CD4-positive, alpha-beta T cell (primary cell): ENCODE measurements at regions of chr16 and their contacts with region 1.

Region 1: GRCh38 chr16:2720719-2721633 is 952 bp upstream of the PRSS27 start:
- DNase-seq: peak; percentile 70 to 94 (median 82)
- ATAC-seq: peak; percentile 87
- H3K4me3 ChIP-seq: peak overlapping the region; percentile 55
- H3K4me3 Mint-ChIP-seq: peak overlapping the region; percentile 81
- H3K27ac ChIP-seq: peak overlapping the region in 1 of 2 donors; percentile 35
- H3K27ac Mint-ChIP-seq: peak overlapping the region; percentile 30
- H3K4me1 ChIP-seq: peaks cover 14% of the 10 kb centered on the region
- H3K4me1 Mint-ChIP-seq: no peaks in the 10 kb centered on the region
- H3K27me3 ChIP-seq: peaks cover 0 to 2% of the 10 kb centered on the region in 2 experiments
- H3K27me3 Mint-ChIP-seq: peaks cover 10% of the 10 kb centered on the region
- CTCF ChIP-seq: peak; percentile 59

Region 2: DNA sequence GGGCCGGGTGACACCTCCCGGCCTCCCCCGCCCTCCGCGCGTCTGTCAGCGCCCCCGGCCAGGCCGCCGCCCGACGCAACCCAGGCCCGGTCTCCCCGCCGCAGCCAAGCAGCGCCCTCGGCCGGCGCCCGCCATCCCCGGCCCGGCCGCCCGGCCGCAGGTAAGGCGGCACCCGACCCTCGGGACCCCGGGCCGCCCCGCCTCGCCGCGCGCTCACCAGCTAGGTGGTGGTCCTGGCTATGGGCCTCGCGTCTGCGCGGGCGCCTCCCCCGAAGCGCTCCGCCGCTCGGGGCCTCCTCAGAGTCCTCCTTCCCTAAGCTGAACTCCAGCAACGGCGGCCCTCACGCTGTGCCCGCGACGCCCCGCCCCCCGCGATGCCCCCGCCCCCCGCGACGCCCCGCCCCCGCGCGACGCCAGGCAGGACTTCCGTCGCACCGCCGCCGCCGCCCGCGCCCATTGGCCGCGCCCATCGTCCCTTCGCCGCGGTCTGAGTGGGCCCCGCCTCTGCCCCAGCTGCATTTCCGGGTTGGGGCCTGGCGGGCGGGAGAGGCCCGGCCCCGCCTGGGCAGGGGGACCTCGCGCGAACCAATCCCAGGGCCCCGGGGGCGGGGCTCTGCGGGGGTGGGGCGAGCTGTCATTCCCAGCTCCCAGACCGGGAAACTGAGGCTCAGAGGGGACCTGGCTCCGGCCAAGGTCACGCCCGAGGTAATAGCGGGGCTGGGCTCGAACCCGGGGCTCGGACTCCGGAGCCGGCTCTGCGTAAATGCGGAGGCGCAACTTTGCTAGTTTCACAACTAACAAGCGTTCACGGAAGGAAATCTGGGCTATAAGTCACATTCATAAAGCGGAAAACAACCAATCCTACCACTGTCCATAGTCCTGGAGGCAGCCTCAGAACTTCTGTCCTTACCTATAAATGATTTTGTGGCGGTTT is 47.6 kb before region 1 on chr16:
- CTCF ChIA-PET with region 1: no interaction called
- POLR2A ChIA-PET with region 1: no interaction called
- intact Hi-C with region 1: loop called in 1 of 2 experiments (anchors 2 kb)
- DNase-seq: peak; percentile 87 to 98 (median 94)
- ATAC-seq: peak; percentile 94
- H3K4me3 ChIP-seq: peak overlapping the region; percentile 86
- H3K4me3 Mint-ChIP-seq: peak overlapping the region; percentile 86
- H3K27ac ChIP-seq: peak overlapping the region; percentile 57 to 66
- H3K27ac Mint-ChIP-seq: peak overlapping the region; percentile 91
- H3K4me1 ChIP-seq: peaks cover 39% of the 10 kb centered on the region
- H3K4me1 Mint-ChIP-seq: peaks cover 27% of the 10 kb centered on the region
- H3K27me3 ChIP-seq: no peaks in the 10 kb centered on the region
- H3K27me3 Mint-ChIP-seq: no peaks in the 10 kb centered on the region
- CTCF ChIP-seq: no peak

Region 3: DNA sequence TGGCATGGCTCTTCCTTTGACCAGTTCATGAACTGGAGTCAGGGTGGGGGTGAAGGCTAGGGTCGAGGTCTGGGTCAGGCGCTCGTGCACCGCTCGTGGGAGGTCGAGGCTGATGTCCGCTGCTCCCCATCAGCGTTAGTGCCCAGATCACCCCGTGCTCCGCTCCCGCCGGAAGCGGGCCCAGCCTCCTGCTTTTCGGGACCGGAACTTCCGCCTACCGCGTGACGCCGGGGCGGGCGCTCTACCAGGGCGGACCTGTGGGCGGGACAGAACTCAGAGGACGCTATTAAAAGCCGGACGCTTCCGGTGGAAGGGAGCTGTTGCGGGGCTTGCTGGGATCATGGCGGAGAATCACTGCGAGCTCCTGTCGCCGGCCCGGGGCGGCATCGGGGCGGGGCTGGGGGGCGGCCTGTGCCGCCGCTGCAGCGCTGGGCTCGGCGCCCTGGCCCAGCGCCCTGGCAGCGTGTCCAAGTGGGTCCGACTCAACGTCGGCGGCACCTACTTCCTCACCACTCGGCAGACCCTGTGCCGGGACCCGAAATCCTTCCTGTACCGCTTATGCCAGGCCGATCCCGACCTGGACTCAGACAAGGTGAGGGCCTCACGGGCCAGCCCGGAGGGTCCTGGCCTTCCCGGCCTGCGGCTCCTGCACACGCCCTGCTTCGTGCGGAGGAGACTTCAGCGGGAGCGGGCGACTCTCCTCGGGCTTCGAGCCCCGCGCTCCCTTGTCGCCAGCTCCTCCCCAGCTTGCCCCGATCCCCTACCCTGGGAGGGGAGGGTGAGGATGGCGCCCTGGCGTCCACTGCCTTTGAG is 38.6 kb before region 1 on chr16 and contains the start of gene KCTD5:
- CTCF ChIA-PET with region 1: no interaction called
- POLR2A ChIA-PET with region 1: interaction called, 3 read pairs
- intact Hi-C with region 1: loop called in 1 of 2 experiments (anchors 1 kb)
- DNase-seq: peak; percentile 93 to 97 (median 94)
- ATAC-seq: peak; percentile 96
- H3K4me3 ChIP-seq: peak within 1 kb of the TSS; percentile 100
- H3K4me3 Mint-ChIP-seq: peak within 1 kb of the TSS; percentile 96
- H3K27ac ChIP-seq: peak within 1 kb of the TSS; percentile 73 to 77
- H3K27ac Mint-ChIP-seq: peak within 1 kb of the TSS; percentile 91
- H3K4me1 ChIP-seq: peaks cover 32% of the 10 kb centered on the region
- H3K4me1 Mint-ChIP-seq: peaks cover 20% of the 10 kb centered on the region
- H3K27me3 ChIP-seq: no peaks in the 10 kb centered on the region
- H3K27me3 Mint-ChIP-seq: no peaks in the 10 kb centered on the region
- CTCF ChIP-seq: no peak
- total RNA-seq, gene KCTD5: 20.6 to 22.6 TPM